ENCODE measurements at regions of chr6 and their contacts with region 1.

Region 1: DNA sequence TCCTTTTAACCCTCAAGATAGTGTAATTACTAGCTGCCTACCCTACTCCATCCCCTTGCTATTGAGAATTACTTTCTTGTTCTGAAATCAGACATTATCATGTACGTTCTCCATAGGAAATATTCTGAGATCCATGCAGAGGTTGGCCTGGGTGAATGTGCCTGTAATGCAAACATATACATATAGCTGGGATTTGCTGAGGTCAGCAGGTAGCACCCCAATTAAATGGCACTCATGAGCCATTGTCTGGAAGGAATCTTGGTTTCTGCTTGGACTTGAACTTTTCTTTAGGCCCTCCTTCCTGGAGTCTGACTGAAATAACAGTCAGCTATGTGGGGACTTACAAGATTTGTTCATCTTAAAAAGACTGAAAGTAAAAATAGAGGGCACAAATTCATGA is 3.7 kb downstream of the HLA-DQB2 start:
- DNase-seq: no peak
- H3K4me3 ChIP-seq: no peak overlapping the region
- CTCF ChIP-seq: no peak

Region 2: GRCh38 chr6:32551410-32551809 is 208.3 kb before region 1 on chr6:
- in situ Hi-C with region 1: no loop called
- DNase-seq: no peak
- H3K4me3 ChIP-seq: no peak overlapping the region
- CTCF ChIP-seq: no peak

Region 3: DNA sequence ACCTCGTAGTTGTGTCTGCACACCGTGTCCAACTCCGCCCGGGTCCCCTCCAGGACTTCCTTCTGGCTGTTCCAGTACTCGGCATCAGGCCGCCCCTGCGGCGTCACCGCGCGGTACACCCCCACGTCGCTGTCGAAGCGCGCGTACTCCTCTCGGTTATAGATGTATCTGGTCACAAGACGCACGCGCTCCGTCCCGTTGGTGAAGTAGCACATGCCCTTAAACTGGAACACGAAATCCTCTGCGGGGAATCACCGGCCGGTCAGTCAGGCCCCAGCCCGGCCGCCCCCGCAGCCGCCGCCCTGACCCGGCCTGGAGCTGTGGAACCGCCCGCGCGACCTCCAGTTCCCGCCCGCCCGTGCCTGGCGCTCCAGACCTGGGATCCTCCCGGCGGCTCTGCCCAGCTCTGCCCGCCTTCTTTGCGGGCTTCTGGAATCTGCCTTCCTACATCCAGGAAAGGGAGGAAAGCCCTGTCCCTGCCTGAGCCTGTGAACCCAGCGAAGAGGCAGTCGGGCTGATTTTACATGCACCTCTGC is 94.8 kb before region 1 on chr6:
- in situ Hi-C with region 1: loop called (anchors 5 kb)
- DNase-seq: no peak
- H3K4me3 ChIP-seq: no peak overlapping the region
- CTCF ChIP-seq: no peak